Body of pancreas (tissue), 4 donors: ENCODE measurements at regions of chr3 and their contacts with region 1.

Region 1: DNA sequence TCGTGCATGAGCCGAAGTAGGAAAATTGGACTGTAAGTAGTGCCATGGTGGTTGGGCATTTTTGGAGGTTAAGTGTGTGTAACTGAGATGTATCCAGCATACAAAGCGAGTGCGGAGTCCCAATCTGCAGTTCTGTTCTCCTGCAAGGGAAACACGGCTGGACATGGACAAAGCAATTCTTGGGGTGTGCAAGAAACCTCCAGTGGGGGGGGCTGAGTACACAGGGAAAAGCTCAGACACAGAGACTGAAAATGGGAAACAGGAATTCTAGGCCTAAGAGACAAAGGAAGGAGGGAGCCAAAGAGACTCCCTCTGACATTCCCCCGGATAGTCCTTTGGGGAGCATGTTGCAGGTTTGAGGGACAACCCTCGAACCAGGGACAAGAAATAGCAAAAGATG is 83.2 kb upstream of the PLSCR4 start:
- DNase-seq: peak; percentile 24 to 45 (median 36)
- ATAC-seq: no peak
- H3K4me3 ChIP-seq: no peak overlapping the region
- H3K27ac ChIP-seq: no peak overlapping the region
- H3K4me1 ChIP-seq: no peaks in the 10 kb centered on the region
- H3K27me3 ChIP-seq: no peaks in the 10 kb centered on the region
- CTCF ChIP-seq: peak in 4 of 7 experiments; percentile 21 to 40 (median 26)
- POLR2A ChIP-seq: no peak

Region 2: GRCh38 chr3:146589899-146590508 is 255.9 kb after region 1 on chr3:
- intact Hi-C with region 1: loop called (anchors 10 kb)
- DNase-seq: peak; percentile 36 to 59 (median 45)
- ATAC-seq: no peak
- H3K4me3 ChIP-seq: no peak overlapping the region
- H3K27ac ChIP-seq: no peak overlapping the region
- H3K4me1 ChIP-seq: no peaks in the 10 kb centered on the region
- H3K27me3 ChIP-seq: no peaks in the 10 kb centered on the region
- CTCF ChIP-seq: peak; percentile 44 to 65 (median 59)
- POLR2A ChIP-seq: no peak